Common myeloid progenitor, CD34-positive (primary cell): ENCODE measurements at regions of chr5 and their contacts with region 1.

Region 1: GRCh38 chr5:141590127-141590526 is 28.7 kb downstream of the DIAPH1 start:
- DNase-seq: peak in 2 of 3 donors; percentile 53 to 61
- H3K4me3 ChIP-seq: no peak overlapping the region
- H3K27ac ChIP-seq: no peak overlapping the region
- H3K4me1 ChIP-seq: peaks cover 0 to 18% (median 10%) of the 10 kb centered on the region in 4 experiments
- H3K27me3 ChIP-seq: no peaks in the 10 kb centered on the region

Region 2: GRCh38 chr5:141524604-141525597 is 65.2 kb before region 1 on chr5:
- CTCF ChIA-PET with region 1: no interaction called
- POLR2A ChIA-PET with region 1: no interaction called
- DNase-seq: peak; percentile 63 to 78 (median 67)
- H3K4me3 ChIP-seq: no peak overlapping the region
- H3K27ac ChIP-seq: no peak overlapping the region
- H3K4me1 ChIP-seq: peaks cover 7 to 19% (median 8%) of the 10 kb centered on the region in 4 experiments
- H3K27me3 ChIP-seq: no peaks in the 10 kb centered on the region

Region 3: GRCh38 chr5:141605523-141606277 is 15.6 kb after region 1 on chr5:
- CTCF ChIA-PET with region 1: interaction called, 29 read pairs
- POLR2A ChIA-PET with region 1: no interaction called
- DNase-seq: peak; percentile 97 to 100 (median 99)
- H3K4me3 ChIP-seq: peak overlapping the region in 4 of 7 experiments; percentile 33 to 56 (median 46)
- H3K27ac ChIP-seq: peak overlapping the region in 1 of 2 experiments; percentile 74
- H3K4me1 ChIP-seq: peaks cover 32 to 63% (median 45%) of the 10 kb centered on the region in 4 experiments
- H3K27me3 ChIP-seq: no peaks in the 10 kb centered on the region

Region 4: GRCh38 chr5:141628175-141628788 is 38.2 kb after region 1 on chr5:
- CTCF ChIA-PET with region 1: interaction called, 64 read pairs
- POLR2A ChIA-PET with region 1: no interaction called
- DNase-seq: no peak
- H3K4me3 ChIP-seq: no peak overlapping the region
- H3K27ac ChIP-seq: no peak overlapping the region
- H3K4me1 ChIP-seq: peaks cover 0 to 5% (median 0%) of the 10 kb centered on the region in 4 experiments
- H3K27me3 ChIP-seq: no peaks in the 10 kb centered on the region